AG04450 (cell line): ENCODE measurements at regions of chr18 and their contacts with region 1.

Region 1: DNA sequence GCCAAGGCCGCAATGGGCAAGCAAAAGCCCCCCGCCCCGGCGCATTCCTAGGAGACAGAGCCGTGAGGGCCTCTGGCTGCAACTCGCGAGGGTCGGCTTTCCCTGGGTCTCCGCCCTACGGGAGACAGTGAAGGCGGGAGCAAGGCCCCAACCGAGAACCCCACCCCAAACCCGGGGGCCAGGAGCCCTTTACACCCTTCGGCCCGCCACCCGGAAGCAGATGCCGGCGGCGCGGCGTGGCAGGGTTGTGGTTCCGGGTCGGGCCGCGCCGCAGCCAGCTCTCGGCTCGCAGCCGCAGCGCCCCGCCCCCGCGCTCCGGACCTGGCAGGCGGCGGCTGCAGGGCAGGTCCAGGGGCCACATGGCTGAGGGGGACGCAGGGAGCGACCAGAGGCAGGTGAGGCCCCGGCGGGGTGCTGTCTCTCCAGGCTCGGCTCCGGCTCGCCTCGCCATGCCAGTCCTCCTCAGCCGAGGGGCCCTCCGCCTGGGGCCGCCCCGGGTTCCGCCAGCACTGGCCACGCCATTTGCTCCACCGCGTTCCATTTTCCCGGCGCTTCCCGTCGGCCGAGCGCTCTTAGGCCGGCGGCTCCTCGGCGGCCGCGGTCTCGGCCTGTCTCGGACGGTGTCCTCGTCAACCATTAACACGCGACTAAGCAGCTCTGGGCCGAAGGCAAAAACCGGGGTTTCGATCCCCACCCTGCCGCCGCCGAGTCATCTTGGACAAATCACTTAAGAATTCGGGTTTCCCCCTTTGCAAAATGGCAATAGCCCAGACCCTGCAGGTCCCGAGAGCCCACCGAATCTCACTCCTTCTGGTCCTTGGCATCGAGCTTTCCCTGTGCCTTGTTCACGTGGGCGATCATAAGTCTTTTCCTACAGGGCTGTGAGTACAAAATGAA is at the start of gene IMPACT:
- DNase-seq: peak; percentile 45
- H3K4me3 ChIP-seq: peak within 1 kb of the TSS; percentile 76
- H3K27ac ChIP-seq: peak within 1 kb of the TSS; percentile 80
- H3K27me3 ChIP-seq: no peaks in the 10 kb centered on the region
- CTCF ChIP-seq: no peak
- polyA plus RNA-seq, gene IMPACT: 23.0 and 31.7 TPM in 2 replicates

Region 2: GRCh38 chr18:24397694-24398365 is 28.8 kb before region 1 on chr18 and contains the start of gene OSBPL1A:
- CTCF ChIA-PET with region 1: no interaction called
- POLR2A ChIA-PET with region 1: interaction called, 15 read pairs
- DNase-seq: peak; percentile 59
- H3K4me3 ChIP-seq: peak within 1 kb of the TSS; percentile 84
- H3K27ac ChIP-seq: peak within 1 kb of the TSS; percentile 52
- H3K27me3 ChIP-seq: no peaks in the 10 kb centered on the region
- CTCF ChIP-seq: no peak
- polyA plus RNA-seq, gene OSBPL1A: 41.0 and 56.1 TPM in 2 replicates